Mammary epithelial cell (primary cell): ENCODE measurements at regions of chr11 and their contacts with region 1.

Region 1: GRCh38 chr11:29809121-29809520 is 207.7 kb downstream of the KCNA4 start:
- DNase-seq: peak; percentile 60
- H3K4me3 ChIP-seq: no peak overlapping the region
- H3K27ac ChIP-seq: no peak overlapping the region
- H3K4me1 ChIP-seq: peaks cover 13% of the 10 kb centered on the region
- H3K27me3 ChIP-seq: no peaks in the 10 kb centered on the region
- CTCF ChIP-seq: no peak

Region 2: GRCh38 chr11:29751618-29752017 is 57.5 kb before region 1 on chr11:
- CTCF ChIA-PET with region 1: no interaction called
- dilution Hi-C with region 1: no loop called
- in situ Hi-C with region 1: loop called in 1 of 2 experiments (anchors 10 kb)
- intact Hi-C with region 1: no loop called
- DNase-seq: peak; percentile 67
- H3K4me3 ChIP-seq: no peak overlapping the region
- H3K27ac ChIP-seq: no peak overlapping the region
- H3K4me1 ChIP-seq: no peaks in the 10 kb centered on the region
- H3K27me3 ChIP-seq: no peaks in the 10 kb centered on the region
- CTCF ChIP-seq: no peak

Region 3: GRCh38 chr11:29826878-29827277 is 17.8 kb after region 1 on chr11:
- CTCF ChIA-PET with region 1: no interaction called
- dilution Hi-C with region 1: no loop called
- in situ Hi-C with region 1: no loop called
- intact Hi-C with region 1: no loop called
- DNase-seq: no peak
- H3K4me3 ChIP-seq: no peak overlapping the region
- H3K27ac ChIP-seq: no peak overlapping the region
- H3K4me1 ChIP-seq: no peaks in the 10 kb centered on the region
- H3K27me3 ChIP-seq: no peaks in the 10 kb centered on the region
- CTCF ChIP-seq: no peak

Region 4: GRCh38 chr11:29914203-29914930 is 105.2 kb after region 1 on chr11:
- CTCF ChIA-PET with region 1: no interaction called
- dilution Hi-C with region 1: no loop called
- in situ Hi-C with region 1: no loop called
- intact Hi-C with region 1: no loop called
- DNase-seq: peak; percentile 68
- H3K4me3 ChIP-seq: no peak overlapping the region
- H3K27ac ChIP-seq: no peak overlapping the region
- H3K4me1 ChIP-seq: no peaks in the 10 kb centered on the region
- H3K27me3 ChIP-seq: no peaks in the 10 kb centered on the region
- CTCF ChIP-seq: no peak

Region 5: DNA sequence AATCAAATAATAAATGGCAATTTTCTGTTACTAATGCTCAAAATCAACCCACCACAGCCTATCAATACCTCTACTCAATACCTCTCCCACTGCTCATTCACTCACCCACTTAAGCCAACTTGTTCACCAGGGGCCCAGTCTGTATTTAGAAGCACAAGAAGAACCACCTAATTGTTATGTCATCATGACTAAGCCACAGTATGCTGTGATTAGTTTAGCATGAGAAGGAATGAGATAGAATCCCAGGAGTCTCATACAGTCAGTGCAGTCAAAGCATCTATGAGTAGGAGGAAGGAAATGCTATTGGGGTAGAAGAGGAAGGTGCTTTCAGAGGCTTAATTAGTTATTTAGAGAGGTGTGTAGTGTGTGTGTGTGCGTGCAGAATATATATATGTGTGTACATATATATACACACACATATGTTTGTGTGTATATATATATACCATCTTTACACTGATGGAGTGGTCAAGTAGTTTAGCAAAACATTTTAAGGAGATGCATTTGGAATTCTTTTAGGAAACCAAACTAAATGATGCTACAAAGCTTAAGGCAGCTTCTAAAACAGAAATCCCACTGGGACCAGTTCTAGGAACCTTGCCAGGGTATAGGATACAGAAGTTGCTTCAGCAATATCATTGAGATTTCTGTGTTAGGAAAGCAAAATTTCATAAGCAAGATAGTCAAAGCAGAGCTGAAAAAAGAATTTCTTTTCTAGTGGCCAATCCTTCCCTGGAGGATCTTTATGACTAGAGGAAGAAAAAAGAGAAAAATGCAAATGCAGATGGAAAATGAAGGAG is 180.3 kb after region 1 on chr11:
- CTCF ChIA-PET with region 1: no interaction called
- dilution Hi-C with region 1: no loop called
- in situ Hi-C with region 1: no loop called
- intact Hi-C with region 1: no loop called
- DNase-seq: peak; percentile 8
- H3K4me3 ChIP-seq: no peak overlapping the region
- H3K27ac ChIP-seq: no peak overlapping the region
- H3K4me1 ChIP-seq: no peaks in the 10 kb centered on the region
- H3K27me3 ChIP-seq: no peaks in the 10 kb centered on the region
- CTCF ChIP-seq: no peak